ENCODE measurements at regions of chr2 and their contacts with region 1.

Region 1: DNA sequence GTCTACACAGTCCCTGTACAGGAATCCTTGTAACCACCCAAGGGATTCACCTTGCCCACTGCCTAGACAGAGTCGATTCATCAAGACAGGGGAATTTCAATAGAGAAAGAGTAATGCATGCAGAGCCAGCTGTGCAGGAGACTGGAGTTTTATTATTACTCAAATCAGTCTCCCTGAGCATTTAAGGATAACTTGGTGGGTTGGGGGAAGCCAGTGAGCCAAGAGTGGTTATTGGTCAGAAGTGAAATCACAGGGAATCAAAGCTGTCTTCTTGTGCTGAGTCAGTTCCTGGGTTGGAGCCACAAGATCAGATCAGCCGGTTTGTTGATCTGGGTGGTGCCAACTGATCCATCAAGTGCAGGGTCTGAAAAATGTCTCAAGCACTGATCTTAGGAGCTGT is 17.8 kb upstream of the FAM98A start:
- DNase-seq: no peak
- ATAC-seq: no peak
- H3K4me3 ChIP-seq: no peak overlapping the region
- H3K27ac ChIP-seq: no peak overlapping the region
- H3K4me1 ChIP-seq: no peaks in the 10 kb centered on the region
- H3K27me3 ChIP-seq: no peaks in the 10 kb centered on the region
- CTCF ChIP-seq: no peak

Region 2: DNA sequence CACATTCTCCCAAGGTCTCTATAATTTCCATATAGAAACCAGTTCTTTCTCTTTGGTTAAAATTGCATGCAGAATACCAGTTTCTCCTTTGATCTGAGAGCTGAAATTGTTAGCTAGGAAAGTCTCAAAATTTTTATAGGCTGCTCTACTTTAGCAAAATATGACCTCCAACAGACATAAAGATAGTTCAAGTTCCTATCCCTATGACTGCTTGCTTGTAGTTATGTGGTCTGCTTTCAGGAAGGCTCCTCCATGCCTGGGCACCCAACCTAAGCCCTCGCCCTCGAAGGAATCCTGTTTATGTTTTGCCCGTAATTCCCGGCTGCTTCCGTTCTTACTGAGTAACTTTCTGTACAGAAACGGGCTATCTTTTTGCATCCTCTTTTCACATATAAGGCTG is 698.1 kb before region 1 on chr2:
- CTCF ChIA-PET with region 1: no interaction called
- POLR2A ChIA-PET with region 1: interaction called, 32 read pairs
- intact Hi-C with region 1: no loop called
- DNase-seq: no peak
- ATAC-seq: no peak
- H3K4me3 ChIP-seq: no peak overlapping the region
- H3K27ac ChIP-seq: no peak overlapping the region
- H3K4me1 ChIP-seq: no peaks in the 10 kb centered on the region
- H3K27me3 ChIP-seq: no peaks in the 10 kb centered on the region
- CTCF ChIP-seq: no peak

Region 3: GRCh38 chr2:33116799-33117198 is 500.1 kb before region 1 on chr2:
- CTCF ChIA-PET with region 1: no interaction called
- POLR2A ChIA-PET with region 1: no interaction called
- intact Hi-C with region 1: no loop called
- DNase-seq: no peak
- ATAC-seq: no peak
- H3K4me3 ChIP-seq: no peak overlapping the region
- H3K27ac ChIP-seq: no peak overlapping the region
- H3K4me1 ChIP-seq: no peaks in the 10 kb centered on the region
- H3K27me3 ChIP-seq: no peaks in the 10 kb centered on the region
- CTCF ChIP-seq: no peak